ENCODE measurements at regions of chr11 and their contacts with region 1.

Region 1: DNA sequence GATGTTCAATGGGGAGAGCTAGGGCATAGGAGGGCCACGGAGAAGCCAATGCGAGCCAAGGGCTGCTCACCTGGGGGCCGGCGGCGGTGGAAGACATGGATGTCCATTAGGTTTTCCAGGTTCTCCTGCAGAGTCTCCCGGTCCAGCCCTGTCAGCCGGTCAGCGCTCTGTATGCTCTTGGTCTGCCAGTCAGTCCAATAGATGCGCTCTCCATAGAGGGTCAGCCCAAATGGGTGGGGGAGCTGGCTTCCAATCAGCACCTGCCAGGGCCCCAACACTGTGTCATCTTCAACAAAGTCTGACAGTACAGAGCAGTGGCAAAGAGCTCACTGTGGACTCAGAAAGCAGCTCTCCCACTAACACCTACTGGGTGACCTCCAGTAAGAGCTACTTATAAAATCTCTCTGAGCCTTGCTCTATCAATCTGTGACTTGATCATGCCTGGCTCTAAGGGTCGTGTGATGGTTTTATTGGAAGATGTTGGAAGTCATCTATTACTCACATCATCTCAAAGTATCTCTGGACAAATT is 33.0 kb upstream of the CKAP5 start:
- DNase-seq: no peak
- H3K4me3 ChIP-seq: no peak overlapping the region
- H3K27ac ChIP-seq: no peak overlapping the region
- H3K4me1 ChIP-seq: no peaks in the 10 kb centered on the region
- H3K27me3 ChIP-seq: no peaks in the 10 kb centered on the region
- CTCF ChIP-seq: no peak
- EP300 ChIP-seq: no peak
- POLR2A ChIP-seq: no peak
- RAD21 ChIP-seq: no peak

Region 2: GRCh38 chr11:46625391-46625790 is 253.7 kb before region 1 on chr11:
- CTCF ChIA-PET with region 1: no interaction called
- POLR2A ChIA-PET with region 1: no interaction called
- DNase-seq: no peak
- H3K4me3 ChIP-seq: no peak overlapping the region
- H3K27ac ChIP-seq: no peak overlapping the region
- H3K4me1 ChIP-seq: no peaks in the 10 kb centered on the region
- H3K27me3 ChIP-seq: no peaks in the 10 kb centered on the region
- CTCF ChIP-seq: no peak
- EP300 ChIP-seq: no peak
- POLR2A ChIP-seq: no peak
- RAD21 ChIP-seq: no peak

Region 3: GRCh38 chr11:46865340-46865739 is 13.8 kb before region 1 on chr11:
- CTCF ChIA-PET with region 1: interaction called, 14 read pairs
- POLR2A ChIA-PET with region 1: no interaction called
- DNase-seq: no peak
- H3K4me3 ChIP-seq: no peak overlapping the region
- H3K27ac ChIP-seq: no peak overlapping the region
- H3K4me1 ChIP-seq: no peaks in the 10 kb centered on the region
- H3K27me3 ChIP-seq: no peaks in the 10 kb centered on the region
- CTCF ChIP-seq: no peak
- EP300 ChIP-seq: no peak
- POLR2A ChIP-seq: no peak
- RAD21 ChIP-seq: no peak

Region 4: GRCh38 chr11:46936138-46937110 is 57.3 kb after region 1 on chr11 and contains the start of gene CSTPP1:
- CTCF ChIA-PET with region 1: no interaction called
- POLR2A ChIA-PET with region 1: no interaction called
- DNase-seq: peak; percentile 71 to 96
- H3K4me3 ChIP-seq: peak within 1 kb of the TSS; percentile 61 to 81 (median 76)
- H3K27ac ChIP-seq: 0 out of 2 replicates have a peak within 1 kb of the TSS, but pooled peaks have one; percentile 23
- H3K4me1 ChIP-seq: peaks cover 0 to 3% (median 0%) of the 10 kb centered on the region in 4 experiments; a peak in 2 of 7 replicates
- H3K27me3 ChIP-seq: no peaks in the 10 kb centered on the region
- CTCF ChIP-seq: no peak
- EP300 ChIP-seq: no peak
- POLR2A ChIP-seq: no peak
- RAD21 ChIP-seq: peak; percentile 2 to 5; a peak in 1 of 4 replicates
- total RNA-seq, gene CSTPP1: 24.2 and 26.2 TPM in 2 replicates

Measured in H1 (cell line).